ENCODE measurements at regions of chr5 and their contacts with region 1.

Region 1: GRCh38 chr5:9348401-9348996 is 197.4 kb downstream of the SEMA5A start:
- DNase-seq: no peak
- H3K4me3 ChIP-seq: no peak overlapping the region
- H3K27ac ChIP-seq: no peak overlapping the region
- H3K27me3 ChIP-seq: no peaks in the 10 kb centered on the region
- CTCF ChIP-seq: no peak

Region 2: GRCh38 chr5:8993031-8993430 is 355.5 kb before region 1 on chr5:
- intact Hi-C with region 1: no loop called
- DNase-seq: no peak
- H3K4me3 ChIP-seq: no peak overlapping the region
- H3K27ac ChIP-seq: no peak overlapping the region
- H3K27me3 ChIP-seq: no peaks in the 10 kb centered on the region
- CTCF ChIP-seq: peak in 24 of 56 donors; percentile 10 to 37 (median 14)

Region 3: GRCh38 chr5:9297134-9297533 is 51.4 kb before region 1 on chr5:
- intact Hi-C with region 1: loop called in 1 of 2 experiments (anchors 10 kb)
- DNase-seq: no peak
- H3K4me3 ChIP-seq: no peak overlapping the region
- H3K27ac ChIP-seq: no peak overlapping the region
- H3K27me3 ChIP-seq: no peaks in the 10 kb centered on the region
- CTCF ChIP-seq: no peak

Region 4: GRCh38 chr5:9903801-9904200 is 555.3 kb after region 1 on chr5:
- intact Hi-C with region 1: no loop called
- DNase-seq: no peak
- H3K4me3 ChIP-seq: no peak overlapping the region
- H3K27ac ChIP-seq: no peak overlapping the region
- H3K27me3 ChIP-seq: no peaks in the 10 kb centered on the region
- CTCF ChIP-seq: no peak

Measured in dorsolateral prefrontal cortex (tissue), 120 donors.